Activated naive CD4-positive, alpha-beta T cell treated with anti-CD3 and anti-CD28 coated beads for 36 hours (primary cell): ENCODE measurements at regions of chr3 and their contacts with region 1.

Region 1: DNA sequence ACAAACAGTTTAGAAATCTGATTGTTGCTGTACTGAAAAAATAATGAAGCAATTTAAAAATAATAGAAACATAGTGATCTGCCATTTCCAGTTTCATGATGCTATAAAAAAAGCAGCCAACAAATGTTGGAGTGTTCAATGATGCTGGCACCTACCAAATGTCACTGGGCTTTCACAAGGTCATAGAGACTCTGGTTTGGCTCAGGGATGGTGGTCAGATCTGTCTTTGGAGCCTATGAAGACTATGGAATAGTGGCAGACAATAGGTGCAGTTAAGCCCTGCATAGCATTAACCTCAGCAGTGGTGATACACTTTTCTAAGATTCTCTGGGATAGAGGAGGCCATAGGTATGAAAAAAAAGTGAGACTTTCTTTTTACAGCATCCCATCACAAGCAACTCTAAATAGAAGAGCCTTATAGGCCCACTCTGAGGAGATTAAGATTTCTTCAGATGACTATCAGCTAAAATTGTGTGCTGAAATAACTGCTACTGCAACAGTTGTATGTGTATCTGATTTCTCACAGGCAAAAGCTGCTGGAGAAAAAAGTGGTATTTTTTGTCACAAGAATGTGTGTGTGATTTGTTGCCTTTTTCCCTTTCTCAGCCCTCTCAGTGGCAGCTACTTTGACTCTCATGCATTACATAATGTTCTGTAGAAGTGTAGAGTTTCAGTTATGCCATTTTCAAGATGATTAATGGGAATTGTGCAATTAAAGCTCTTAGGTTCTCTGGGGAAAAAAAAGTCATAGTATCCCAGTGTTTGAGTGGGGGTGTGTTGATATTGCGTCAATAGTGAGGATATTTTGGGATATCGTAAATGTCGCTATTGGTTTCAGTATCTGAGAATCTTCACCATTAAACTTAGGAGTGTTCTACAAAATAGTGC is 137.4 kb downstream of the MBNL1 start:
- DNase-seq: no peak
- H3K4me3 Mint-ChIP-seq: no peak overlapping the region
- H3K27ac Mint-ChIP-seq: peak overlapping the region; percentile 73
- H3K4me1 Mint-ChIP-seq: peaks cover 74% of the 10 kb centered on the region
- H3K27me3 Mint-ChIP-seq: no peaks in the 10 kb centered on the region

Region 2: GRCh38 chr3:152416808-152417580 is 10.8 kb after region 1 on chr3:
- CTCF ChIA-PET with region 1: interaction called, 7 read pairs
- intact Hi-C with region 1: loop called (anchors 1 kb)
- DNase-seq: no peak
- H3K4me3 Mint-ChIP-seq: no peak overlapping the region
- H3K27ac Mint-ChIP-seq: peak overlapping the region; percentile 65
- H3K4me1 Mint-ChIP-seq: peaks cover 71% of the 10 kb centered on the region
- H3K27me3 Mint-ChIP-seq: no peaks in the 10 kb centered on the region